Posterior vena cava (tissue), 2 donors: ENCODE measurements at regions of chr3 and their contacts with region 1.

Region 1: GRCh38 chr3:159280386-159281191 is 478.7 kb downstream of the MFSD1 start:
- DNase-seq: no peak

Region 2: DNA sequence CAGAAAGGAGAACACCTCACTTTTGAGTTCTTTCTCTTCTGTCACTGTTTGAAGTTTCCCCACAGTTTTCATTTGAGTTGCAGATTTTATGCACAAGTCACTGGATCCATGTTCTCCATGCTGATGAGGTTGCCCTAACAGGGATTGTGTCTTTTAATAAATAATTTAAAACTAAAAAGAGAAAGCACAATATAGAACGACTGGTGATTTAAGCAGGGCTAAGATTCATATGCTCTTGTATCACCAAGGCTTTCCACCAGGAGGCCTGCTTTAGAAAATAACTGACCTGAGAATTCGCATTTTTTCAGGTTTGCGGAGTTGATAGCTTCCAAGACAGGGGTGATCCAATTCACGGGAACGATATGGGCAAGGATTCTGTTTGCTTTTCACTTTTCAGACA is 1525.4 kb before region 1 on chr3:
- intact Hi-C with region 1: no loop called
- DNase-seq: no peak

Region 3: GRCh38 chr3:159219231-159219630 is 61.4 kb before region 1 on chr3:
- intact Hi-C with region 1: no loop called
- DNase-seq: no peak

Region 4: DNA sequence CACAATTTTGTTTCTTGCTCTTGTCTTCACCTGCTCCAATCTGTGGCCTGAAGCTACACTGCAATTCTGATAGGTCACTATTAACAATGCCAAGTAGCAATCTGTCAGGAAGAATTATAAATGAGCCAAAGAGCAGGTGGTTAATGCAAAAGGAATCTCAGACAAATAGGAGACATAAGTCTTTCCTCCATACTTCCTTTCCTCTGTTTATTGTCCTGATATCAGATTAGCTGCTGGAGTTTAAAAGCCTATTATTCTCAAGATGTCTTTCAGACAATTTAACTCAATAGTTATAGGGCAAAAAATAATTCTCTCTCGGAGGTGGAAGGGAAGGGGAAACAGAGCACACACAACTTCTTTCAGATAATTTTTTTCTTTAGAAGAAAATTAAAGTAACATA is 12.9 kb after region 1 on chr3:
- intact Hi-C with region 1: loop called in 1 of 2 experiments (anchors 1 kb)
- DNase-seq: no peak